ENCODE measurements at regions of chr15 and their contacts with region 1.

Region 1: GRCh38 chr15:98196371-98196770 is 235.9 kb downstream of the ARRDC4 start:
- DNase-seq: no peak
- ATAC-seq: no peak
- H3K4me3 Mint-ChIP-seq: no peak overlapping the region
- H3K27ac Mint-ChIP-seq: no peak overlapping the region
- H3K4me1 Mint-ChIP-seq: no peaks in the 10 kb centered on the region
- H3K27me3 Mint-ChIP-seq: no peaks in the 10 kb centered on the region
- CTCF ChIP-seq: no peak

Region 2: DNA sequence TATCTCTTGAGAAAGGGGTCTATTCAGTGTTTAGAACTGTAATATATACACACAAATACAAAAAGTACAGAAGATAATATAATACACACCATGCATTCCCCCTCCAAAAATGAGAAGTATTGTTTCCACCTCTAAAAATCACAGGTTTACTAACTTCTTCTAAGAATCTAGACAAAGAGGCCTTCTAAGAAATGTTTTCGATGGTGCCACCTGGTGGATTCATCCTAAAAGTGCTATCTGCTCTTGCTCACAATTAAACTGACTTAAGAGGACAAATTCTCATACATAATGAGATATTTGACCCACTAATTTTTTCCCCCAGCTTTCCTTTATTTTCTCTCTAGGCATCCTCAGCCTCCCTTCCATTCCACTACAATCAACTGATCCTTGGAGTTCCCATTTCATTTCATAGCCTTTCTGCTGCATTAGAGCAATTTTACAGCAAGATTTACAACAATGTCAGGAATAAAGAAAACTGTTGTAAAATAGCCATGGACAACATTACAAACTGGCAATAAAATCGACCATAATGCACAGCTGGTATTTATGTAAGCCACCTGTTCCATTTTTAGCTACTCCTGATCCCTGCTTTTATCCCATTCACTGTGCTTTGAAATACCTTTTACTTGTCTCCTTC is 111.2 kb before region 1 on chr15:
- CTCF ChIA-PET with region 1: no interaction called
- POLR2A ChIA-PET with region 1: no interaction called
- intact Hi-C with region 1: no loop called
- DNase-seq: peak; percentile 51
- ATAC-seq: no peak
- H3K4me3 Mint-ChIP-seq: no peak overlapping the region
- H3K27ac Mint-ChIP-seq: no peak overlapping the region
- H3K4me1 Mint-ChIP-seq: no peaks in the 10 kb centered on the region
- H3K27me3 Mint-ChIP-seq: no peaks in the 10 kb centered on the region
- CTCF ChIP-seq: peak; percentile 58

Region 3: DNA sequence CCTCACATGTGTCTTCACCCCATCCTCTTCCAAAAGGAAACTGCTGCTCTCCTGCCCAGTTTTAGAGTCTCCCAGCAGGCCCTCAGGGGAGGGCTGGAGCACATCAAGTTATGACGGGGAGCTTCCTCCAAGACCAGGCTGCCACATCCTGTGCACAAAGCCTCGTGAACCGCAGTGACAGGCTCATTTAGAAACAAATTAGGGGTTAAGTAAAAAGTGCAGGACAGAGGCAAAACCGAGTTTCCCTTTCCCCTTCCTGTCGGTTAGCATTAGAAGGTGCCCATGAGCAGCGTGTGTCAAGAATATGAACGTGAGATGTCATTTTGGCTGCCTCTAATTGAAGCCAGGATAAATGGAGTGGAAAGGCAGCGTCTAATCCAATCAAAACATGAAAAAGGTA is 36.1 kb before region 1 on chr15:
- CTCF ChIA-PET with region 1: no interaction called
- POLR2A ChIA-PET with region 1: no interaction called
- intact Hi-C with region 1: no loop called
- DNase-seq: peak; percentile 55
- ATAC-seq: peak; percentile 92
- H3K4me3 Mint-ChIP-seq: no peak overlapping the region
- H3K27ac Mint-ChIP-seq: no peak overlapping the region
- H3K4me1 Mint-ChIP-seq: peaks cover 4% of the 10 kb centered on the region
- H3K27me3 Mint-ChIP-seq: peaks cover 1% of the 10 kb centered on the region
- CTCF ChIP-seq: no peak

Region 4: GRCh38 chr15:98177924-98178592 is 18.3 kb before region 1 on chr15:
- CTCF ChIA-PET with region 1: interaction called, 10 read pairs
- POLR2A ChIA-PET with region 1: no interaction called
- intact Hi-C with region 1: no loop called
- DNase-seq: peak; percentile 31
- ATAC-seq: peak; percentile 74
- H3K4me3 Mint-ChIP-seq: no peak overlapping the region
- H3K27ac Mint-ChIP-seq: no peak overlapping the region
- H3K4me1 Mint-ChIP-seq: peaks cover 6% of the 10 kb centered on the region
- H3K27me3 Mint-ChIP-seq: peaks cover 14% of the 10 kb centered on the region
- CTCF ChIP-seq: peak; percentile 54